Lower lobe of right lung (tissue), 2 donors: ENCODE measurements at regions of chr4 and their contacts with region 1.

Region 1: DNA sequence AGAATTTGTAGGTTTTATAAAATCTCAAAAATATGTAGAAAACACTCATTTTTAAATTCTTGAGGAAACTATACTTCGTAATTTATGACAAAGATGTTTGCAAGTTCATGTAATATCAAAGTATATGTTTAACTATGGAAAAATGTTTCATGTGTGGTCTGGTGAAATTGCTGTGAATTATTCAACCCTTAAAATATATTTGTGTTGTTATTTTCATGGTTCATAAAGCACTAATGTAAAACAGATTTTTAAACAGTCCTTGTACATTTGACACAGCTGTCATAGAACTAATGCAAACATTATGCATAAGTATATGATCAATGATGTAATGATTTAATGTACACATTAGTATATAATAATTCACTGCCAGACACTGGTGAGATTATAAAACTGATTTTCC is 83.1 kb upstream of the ARSJ start:
- DNase-seq: no peak
- ATAC-seq: no peak
- H3K4me3 ChIP-seq: no peak overlapping the region
- H3K27ac ChIP-seq: no peak overlapping the region
- H3K4me1 ChIP-seq: no peaks in the 10 kb centered on the region
- H3K27me3 ChIP-seq: no peaks in the 10 kb centered on the region
- CTCF ChIP-seq: no peak

Region 2: GRCh38 chr4:113952452-113953029 is 110.0 kb before region 1 on chr4:
- intact Hi-C with region 1: loop called (anchors 10 kb)
- DNase-seq: no peak
- ATAC-seq: peak; percentile 74 to 89
- H3K4me3 ChIP-seq: no peak overlapping the region
- H3K27ac ChIP-seq: no peak overlapping the region
- H3K4me1 ChIP-seq: no peaks in the 10 kb centered on the region
- H3K27me3 ChIP-seq: no peaks in the 10 kb centered on the region
- CTCF ChIP-seq: peak; percentile 71

Region 3: GRCh38 chr4:114025176-114025777 is 37.2 kb before region 1 on chr4:
- intact Hi-C with region 1: no loop called
- DNase-seq: no peak
- ATAC-seq: no peak
- H3K4me3 ChIP-seq: no peak overlapping the region
- H3K27ac ChIP-seq: no peak overlapping the region
- H3K4me1 ChIP-seq: no peaks in the 10 kb centered on the region
- H3K27me3 ChIP-seq: no peaks in the 10 kb centered on the region
- CTCF ChIP-seq: no peak